Mammary epithelial cell (primary cell): ENCODE measurements at regions of chr12 and their contacts with region 1.

Region 1: DNA sequence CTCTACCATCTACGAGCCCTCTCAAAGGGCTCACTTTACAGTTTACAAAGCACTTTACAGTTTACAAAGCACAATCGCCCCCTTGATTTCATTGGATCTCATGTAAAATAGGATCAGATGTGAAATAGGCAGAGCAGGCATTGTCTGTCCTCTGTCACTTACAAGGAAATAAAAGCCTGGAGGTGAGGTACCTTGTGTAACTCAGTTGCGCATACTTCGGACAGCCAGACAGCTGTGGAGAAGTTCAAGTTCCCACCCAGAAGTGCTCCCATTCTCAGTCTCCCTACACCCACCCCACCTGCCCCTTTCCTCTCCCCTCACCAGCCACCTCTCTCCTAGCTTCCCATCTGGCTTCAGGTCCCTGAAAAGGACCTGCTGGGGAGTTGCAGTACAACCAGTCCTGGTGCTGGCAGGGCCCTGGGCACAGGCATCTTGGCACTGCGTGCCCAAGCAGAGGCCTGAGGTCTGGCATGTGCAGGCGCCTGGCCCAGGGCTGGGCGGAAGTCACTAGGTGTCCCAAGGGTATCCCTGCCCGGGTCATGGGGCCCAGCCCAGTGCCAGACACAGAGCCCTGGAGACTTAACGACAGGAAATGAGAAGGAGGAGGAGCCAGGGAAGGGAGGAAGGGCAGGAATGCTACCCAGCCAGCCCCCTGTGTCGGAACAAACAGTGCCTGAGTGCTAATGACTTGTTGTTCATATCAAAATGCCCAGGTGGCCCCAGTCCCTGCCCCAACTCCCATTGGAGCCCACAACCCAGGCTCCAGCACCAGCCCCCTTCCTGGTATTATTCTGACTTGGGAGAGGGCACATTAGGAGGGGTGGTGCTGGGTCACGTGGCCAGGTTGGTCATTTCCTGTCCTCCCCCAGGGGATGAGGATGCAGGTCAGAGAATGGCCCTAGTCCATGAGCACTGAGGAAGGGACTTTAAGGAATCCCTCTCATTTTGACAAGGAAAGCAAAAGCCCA is 5.4 kb downstream of the RAPGEF3 start:
- DNase-seq: peak; percentile 61
- H3K4me3 ChIP-seq: no peak overlapping the region
- H3K27ac ChIP-seq: peak overlapping the region; percentile 94
- H3K4me1 ChIP-seq: peaks cover 70% of the 10 kb centered on the region
- H3K27me3 ChIP-seq: no peaks in the 10 kb centered on the region
- CTCF ChIP-seq: no peak

Region 2: GRCh38 chr12:47281667-47282171 is 471.6 kb before region 1 on chr12:
- CTCF ChIA-PET with region 1: no interaction called
- dilution Hi-C with region 1: no loop called
- in situ Hi-C with region 1: no loop called
- intact Hi-C with region 1: no loop called
- DNase-seq: peak; percentile 71
- H3K4me3 ChIP-seq: no peak overlapping the region
- H3K27ac ChIP-seq: no peak overlapping the region
- H3K4me1 ChIP-seq: peaks cover 43% of the 10 kb centered on the region
- H3K27me3 ChIP-seq: no peaks in the 10 kb centered on the region
- CTCF ChIP-seq: no peak

Region 3: DNA sequence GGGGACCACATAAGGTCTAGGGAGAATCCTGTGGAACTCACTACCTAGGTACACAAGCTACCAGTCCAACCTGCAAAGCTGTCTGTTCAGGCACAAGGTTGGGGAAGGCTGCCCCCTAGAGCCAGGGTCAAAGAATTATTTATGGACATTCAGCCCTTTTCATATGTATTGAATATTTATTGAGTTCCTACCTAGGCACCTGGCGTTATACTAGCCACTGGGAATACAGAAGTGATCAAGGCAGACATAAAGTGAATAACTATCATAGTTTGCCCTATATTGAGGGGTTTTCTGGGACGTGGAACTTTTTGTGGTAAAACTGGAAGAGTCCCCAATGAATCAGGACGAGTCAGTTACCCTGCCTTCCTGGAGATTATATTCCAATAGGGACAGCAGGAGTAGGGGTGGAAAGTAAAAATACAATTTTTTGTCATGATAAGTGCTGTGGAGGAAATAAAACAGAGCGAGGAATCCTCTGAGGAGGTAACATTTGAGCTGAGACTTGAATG is 14.0 kb after region 1 on chr12:
- CTCF ChIA-PET with region 1: no interaction called
- dilution Hi-C with region 1: no loop called
- in situ Hi-C with region 1: no loop called
- intact Hi-C with region 1: loop called (anchors 2 kb)
- DNase-seq: no peak
- H3K4me3 ChIP-seq: no peak overlapping the region
- H3K27ac ChIP-seq: no peak overlapping the region
- H3K4me1 ChIP-seq: peaks cover 58% of the 10 kb centered on the region
- H3K27me3 ChIP-seq: no peaks in the 10 kb centered on the region
- CTCF ChIP-seq: peak; percentile 65 to 72